SK-N-SH (cell line): ENCODE measurements at regions of chr2 and their contacts with region 1.

Region 1: DNA sequence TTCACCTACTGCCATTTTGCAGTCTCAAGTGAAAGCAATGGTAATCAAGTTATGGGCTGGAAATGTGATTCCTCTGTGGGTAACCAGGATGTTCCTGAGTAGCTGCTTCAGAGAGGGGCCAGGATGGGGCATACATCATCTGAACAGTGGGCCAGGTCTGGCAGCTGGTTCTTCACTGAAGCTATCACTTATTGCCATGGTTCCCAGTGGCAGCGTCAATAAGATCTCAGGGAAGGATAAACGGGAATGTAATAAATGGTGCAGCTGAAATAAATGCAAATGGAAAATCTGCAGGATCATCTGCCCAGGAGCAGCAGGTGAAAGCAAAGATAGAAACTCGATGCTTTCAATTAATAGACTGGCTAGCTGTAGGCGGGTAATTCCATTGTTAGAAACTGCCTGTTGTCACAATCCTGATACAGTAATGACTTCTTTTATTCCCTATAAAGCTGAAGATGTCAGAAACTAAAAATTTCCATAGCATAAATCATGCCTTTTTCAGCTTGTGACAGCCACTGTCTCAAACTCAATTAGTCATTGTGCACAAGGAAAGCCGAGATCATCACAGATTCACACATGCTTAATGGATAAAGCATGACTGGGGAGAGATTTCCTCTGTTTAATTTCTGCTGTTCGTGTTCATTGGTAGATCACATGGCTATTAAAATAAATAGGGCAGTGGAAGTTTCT is 56.2 kb upstream of the CCDC85A start:
- DNase-seq: peak; percentile 34
- H3K4me3 ChIP-seq: no peak overlapping the region
- H3K27ac ChIP-seq: peak overlapping the region in 1 of 2 experiments; percentile 64; a peak in 1 of 4 replicates
- H3K4me1 ChIP-seq: peaks cover 0 to 7% of the 10 kb centered on the region in 2 experiments; a peak in 3 of 4 replicates
- H3K27me3 ChIP-seq: no peaks in the 10 kb centered on the region
- CTCF ChIP-seq: no peak
- EP300 ChIP-seq: no peak
- RAD21 ChIP-seq: no peak

Region 2: GRCh38 chr2:56077352-56077915 is 50.2 kb before region 1 on chr2:
- CTCF ChIA-PET with region 1: interaction called, 10 read pairs
- POLR2A ChIA-PET with region 1: no interaction called
- DNase-seq: peak; percentile 21
- H3K4me3 ChIP-seq: no peak overlapping the region
- H3K27ac ChIP-seq: no peak overlapping the region
- H3K4me1 ChIP-seq: no peaks in the 10 kb centered on the region
- H3K27me3 ChIP-seq: no peaks in the 10 kb centered on the region; the same call in 1 of the 2 replicates
- CTCF ChIP-seq: peak; percentile 62
- EP300 ChIP-seq: no peak
- RAD21 ChIP-seq: peak; percentile 47